ENCODE measurements at regions of chr5 and their contacts with region 1.

Region 1: GRCh38 chr5:124748687-124749594 is 2.5 kb upstream of the ZNF608 start:
- DNase-seq: no peak

Region 2: DNA sequence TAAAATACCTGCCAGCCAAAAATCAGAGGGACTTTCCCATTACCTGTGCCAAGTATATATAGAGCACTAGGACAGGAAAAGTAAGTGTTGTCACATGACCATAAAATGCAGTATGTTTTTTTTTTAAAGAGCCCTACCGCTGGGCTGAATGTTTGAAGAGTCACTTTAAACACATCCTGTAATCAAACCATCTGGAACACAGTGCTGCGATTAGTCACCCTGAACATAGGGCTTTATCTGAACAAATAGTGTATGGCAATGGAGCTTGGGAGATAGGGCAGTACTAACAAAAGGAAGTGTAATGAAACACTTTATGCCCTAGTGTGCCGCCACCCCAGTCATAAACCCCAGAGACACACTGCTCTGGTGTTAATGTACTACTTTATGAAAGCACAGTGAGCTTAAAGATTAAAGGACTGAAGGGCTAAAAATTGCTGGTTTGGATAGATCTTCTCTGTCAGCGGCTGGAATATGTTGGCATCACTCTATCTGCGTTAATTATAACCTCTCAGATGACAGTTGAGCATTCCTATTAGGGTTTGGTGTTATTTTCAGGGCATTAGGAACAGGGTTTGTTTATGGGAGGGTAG is 92.9 kb before region 1 on chr5:
- intact Hi-C with region 1: loop called (anchors 2 to 10 kb)
- DNase-seq: no peak

Region 3: DNA sequence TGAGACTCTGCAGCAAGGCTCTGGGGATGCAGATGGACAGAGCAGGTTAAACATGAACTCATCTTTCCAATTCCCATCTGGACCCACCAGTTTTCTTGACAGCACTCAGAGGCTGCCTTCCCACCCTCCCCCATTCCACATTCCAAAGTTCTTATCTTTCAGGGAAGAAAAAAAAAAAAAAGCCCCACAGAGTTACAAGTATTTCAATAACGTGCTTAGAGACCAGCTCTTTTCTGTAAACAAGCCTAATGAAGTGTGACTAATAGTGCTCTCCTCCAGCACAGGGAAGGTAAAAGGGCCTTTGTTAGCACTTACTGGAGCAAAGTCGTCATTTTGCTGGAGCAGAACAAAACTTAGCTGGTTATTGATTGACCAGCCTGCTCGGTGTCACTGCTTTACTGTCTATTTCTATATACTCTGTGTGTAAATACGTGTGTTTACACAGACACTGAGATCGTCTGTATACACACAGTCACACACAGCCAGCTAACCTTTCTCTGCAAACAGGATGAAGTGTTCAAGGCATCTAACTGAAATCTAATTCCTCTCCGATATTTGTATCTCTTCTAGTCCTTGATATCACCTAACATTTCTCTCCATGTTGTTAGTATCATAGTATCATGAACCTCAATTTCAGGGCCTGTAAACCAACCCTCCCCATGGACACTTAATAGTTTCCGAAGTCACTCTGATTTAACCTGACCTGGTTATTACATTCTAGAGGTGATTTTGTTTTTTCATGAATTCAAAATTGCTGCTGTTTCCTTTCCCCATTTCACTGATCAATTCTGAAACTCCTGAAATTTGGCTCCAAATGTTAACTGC is 87.4 kb before region 1 on chr5:
- intact Hi-C with region 1: loop called in 1 of 2 experiments (anchors 10 kb)
- DNase-seq: no peak

Region 4: DNA sequence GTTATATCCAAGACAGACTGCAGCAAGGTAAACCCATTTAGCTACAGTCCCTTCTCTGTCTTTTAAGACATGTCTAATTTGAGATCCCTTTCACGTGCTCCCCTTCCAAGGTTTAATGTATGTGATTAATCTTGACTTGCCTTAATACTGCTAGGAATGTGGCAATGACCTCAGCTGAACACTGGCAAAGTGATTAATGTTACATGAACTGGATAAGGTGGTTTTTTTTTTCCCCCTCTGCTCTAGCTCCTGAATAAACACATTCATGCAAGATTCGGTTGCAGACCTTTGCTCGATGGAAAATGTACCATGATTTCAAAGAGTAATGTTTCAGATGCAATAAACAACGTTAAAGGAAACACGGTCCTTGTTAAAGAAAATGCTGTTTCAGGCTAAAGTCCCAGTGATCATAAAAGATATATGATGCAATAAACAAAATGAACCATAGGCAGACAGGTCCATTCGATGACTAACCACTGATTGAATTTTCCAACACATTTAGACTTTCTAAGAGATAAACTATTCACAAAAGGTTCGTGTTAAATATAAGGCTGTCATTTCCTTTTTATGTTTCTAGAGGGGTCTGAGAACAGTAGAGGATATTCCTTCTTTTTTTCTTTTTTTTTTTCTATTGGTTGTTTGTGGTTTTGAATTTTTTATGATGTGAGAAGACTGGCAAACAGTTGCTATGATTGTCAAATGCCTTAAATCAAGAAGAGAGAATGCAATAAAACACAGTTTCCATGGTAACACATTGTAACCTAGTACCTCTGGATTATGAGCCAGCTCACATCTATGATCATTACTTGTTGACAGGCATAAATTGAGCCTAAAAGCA is 42.2 kb after region 1 on chr5:
- intact Hi-C with region 1: no loop called
- DNase-seq: no peak

Region 5: DNA sequence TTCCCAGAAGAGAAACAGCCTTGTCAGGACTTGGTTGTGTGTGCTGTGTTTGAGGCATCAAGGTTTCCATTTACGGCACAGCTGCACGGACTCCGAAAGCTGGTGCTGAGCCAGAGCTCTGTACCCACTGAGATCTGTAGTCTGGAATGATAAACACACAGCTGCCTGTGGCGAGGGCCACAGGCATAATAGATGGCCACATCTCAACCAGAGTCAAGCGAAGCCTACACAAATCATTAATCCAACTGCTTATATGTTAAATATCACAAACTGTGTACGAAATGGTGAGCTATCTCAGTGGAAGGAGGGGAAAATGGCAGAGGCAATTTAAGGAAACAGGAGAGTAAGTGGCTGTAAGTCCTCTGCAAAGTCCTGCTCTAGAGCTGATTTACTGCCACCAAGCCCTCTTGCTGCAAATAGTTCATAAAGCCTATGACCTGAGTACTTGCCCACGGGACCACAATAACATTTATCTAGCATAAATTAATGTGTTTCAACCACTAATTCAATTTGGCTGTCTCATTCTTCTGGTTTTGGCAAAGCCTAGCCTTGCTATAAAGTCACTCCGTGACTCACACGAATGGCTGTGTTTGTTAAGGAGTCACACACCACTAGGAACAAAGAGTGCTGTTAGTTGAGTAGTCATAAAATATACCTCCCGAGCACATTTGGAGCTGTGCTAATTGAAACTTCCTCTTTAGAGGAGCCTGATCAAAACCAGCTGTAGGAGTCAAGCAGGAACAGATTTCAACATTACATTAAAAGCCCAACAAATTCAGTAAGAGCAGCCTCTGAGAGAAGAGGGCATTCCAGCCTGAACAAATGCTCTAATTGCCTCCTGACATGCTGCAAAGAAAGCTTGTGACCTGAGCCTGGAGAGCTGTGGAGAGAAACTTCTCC is 736.1 kb after region 1 on chr5:
- intact Hi-C with region 1: loop called in 1 of 2 experiments (anchors 10 kb)
- DNase-seq: peak; percentile 87

Measured in posterior vena cava (tissue), 2 donors.